ENCODE measurements at regions of chr7 and their contacts with region 1.

Region 1: DNA sequence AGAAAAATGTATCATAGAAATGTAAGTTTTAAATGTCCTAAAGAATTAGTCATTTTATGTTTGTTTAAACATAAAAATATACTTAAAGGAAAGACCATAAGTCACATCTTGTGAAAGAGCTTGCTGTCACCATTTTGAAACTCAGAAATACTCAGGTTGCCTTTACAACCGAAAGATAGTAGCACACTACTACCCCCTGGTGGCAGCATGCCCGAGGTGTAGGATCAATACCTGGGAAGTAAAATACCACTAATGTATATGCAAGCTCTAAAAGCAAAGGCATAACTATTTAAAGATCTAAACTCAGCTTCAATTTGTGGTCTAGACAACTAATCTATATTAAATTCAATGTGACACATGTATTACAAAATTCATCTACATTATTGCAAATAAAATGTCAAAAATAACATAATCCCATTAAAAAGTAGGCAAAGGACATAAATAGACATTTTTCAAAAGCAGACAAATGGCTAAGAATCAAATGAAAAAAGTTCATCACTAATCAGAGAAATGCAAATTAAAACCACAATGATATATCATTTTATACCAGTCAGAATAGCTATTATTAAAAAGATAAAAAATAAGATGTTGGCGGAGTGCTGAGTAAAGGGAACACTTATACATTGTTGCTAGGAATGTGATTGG is 47.7 kb upstream of the FGL2 start:
- DNase-seq: peak; percentile 49
- H3K4me3 ChIP-seq: no peak overlapping the region
- H3K27ac ChIP-seq: no peak overlapping the region
- H3K27me3 ChIP-seq: no peaks in the 10 kb centered on the region
- CTCF ChIP-seq: peak; percentile 92

Region 2: GRCh38 chr7:77199013-77199966 is 48.0 kb before region 1 on chr7 and contains the start of gene FGL2:
- CTCF ChIA-PET with region 1: interaction called, 12 read pairs
- POLR2A ChIA-PET with region 1: no interaction called
- DNase-seq: peak; percentile 15
- H3K4me3 ChIP-seq: peak within 1 kb of the TSS; percentile 64
- H3K27ac ChIP-seq: no peak within 1 kb of the TSS
- H3K27me3 ChIP-seq: no peaks in the 10 kb centered on the region
- CTCF ChIP-seq: no peak
- polyA plus RNA-seq, gene FGL2: 28.8 TPM in 2 replicates

Region 3: GRCh38 chr7:77258014-77258413 is 10.7 kb after region 1 on chr7:
- CTCF ChIA-PET with region 1: interaction called, 22 read pairs
- POLR2A ChIA-PET with region 1: no interaction called
- DNase-seq: peak; percentile 55
- H3K4me3 ChIP-seq: no peak overlapping the region
- H3K27ac ChIP-seq: peak overlapping the region; percentile 12
- H3K27me3 ChIP-seq: no peaks in the 10 kb centered on the region
- CTCF ChIP-seq: no peak

Region 4: GRCh38 chr7:77295549-77295948 is 48.2 kb after region 1 on chr7:
- CTCF ChIA-PET with region 1: interaction called, 10 read pairs
- POLR2A ChIA-PET with region 1: no interaction called
- DNase-seq: no peak
- H3K4me3 ChIP-seq: no peak overlapping the region
- H3K27ac ChIP-seq: no peak overlapping the region
- H3K27me3 ChIP-seq: no peaks in the 10 kb centered on the region
- CTCF ChIP-seq: no peak

Region 5: DNA sequence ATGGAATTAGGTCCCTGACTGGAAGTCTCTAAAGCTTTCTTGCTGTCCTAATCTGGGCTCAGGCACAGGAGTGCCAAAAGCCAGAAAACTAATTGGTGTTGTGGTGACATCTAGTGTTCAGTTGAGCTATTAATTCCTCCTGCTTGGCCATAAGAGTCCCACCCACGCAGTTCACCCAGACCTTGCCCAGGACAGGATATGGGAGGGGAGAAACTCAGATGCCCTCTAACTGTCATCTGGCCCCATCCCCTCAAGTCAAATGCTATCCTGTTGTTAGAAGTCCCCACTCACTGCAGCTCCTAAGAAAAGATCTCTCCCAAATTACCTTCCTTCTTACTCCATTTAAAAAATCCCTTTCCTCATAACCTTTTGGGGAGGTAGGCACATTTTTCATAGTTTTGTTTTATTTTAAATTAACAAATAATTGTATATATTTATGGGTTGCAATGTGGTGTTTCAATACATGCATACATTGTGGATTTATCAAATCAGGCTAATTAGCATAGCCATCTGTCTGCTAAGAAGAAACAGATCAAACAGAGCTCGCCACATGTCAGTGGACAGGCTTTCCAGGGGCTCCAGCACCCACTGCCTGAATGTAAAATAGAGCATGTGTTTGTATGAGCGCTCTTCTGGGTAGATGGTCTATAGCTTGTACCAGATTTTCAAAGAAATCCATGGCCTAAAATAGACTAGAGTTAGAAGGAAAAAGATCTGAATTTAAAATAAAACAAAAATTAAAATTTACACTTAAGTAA is 84.8 kb after region 1 on chr7:
- CTCF ChIA-PET with region 1: interaction called, 45 read pairs
- POLR2A ChIA-PET with region 1: no interaction called
- DNase-seq: peak; percentile 76
- H3K4me3 ChIP-seq: no peak overlapping the region
- H3K27ac ChIP-seq: no peak overlapping the region
- H3K27me3 ChIP-seq: no peaks in the 10 kb centered on the region
- CTCF ChIP-seq: peak; percentile 71